Panc1 (cell line): ENCODE measurements at regions of chr11 and their contacts with region 1.

Region 1: GRCh38 chr11:24653901-24654300 is 157.0 kb downstream of the LUZP2 start:
- DNase-seq: no peak
- ATAC-seq: no peak
- H3K4me3 ChIP-seq: no peak overlapping the region
- H3K27ac ChIP-seq: no peak overlapping the region
- H3K4me1 ChIP-seq: no peaks in the 10 kb centered on the region
- H3K27me3 ChIP-seq: no peaks in the 10 kb centered on the region
- CTCF ChIP-seq: no peak

Region 2: DNA sequence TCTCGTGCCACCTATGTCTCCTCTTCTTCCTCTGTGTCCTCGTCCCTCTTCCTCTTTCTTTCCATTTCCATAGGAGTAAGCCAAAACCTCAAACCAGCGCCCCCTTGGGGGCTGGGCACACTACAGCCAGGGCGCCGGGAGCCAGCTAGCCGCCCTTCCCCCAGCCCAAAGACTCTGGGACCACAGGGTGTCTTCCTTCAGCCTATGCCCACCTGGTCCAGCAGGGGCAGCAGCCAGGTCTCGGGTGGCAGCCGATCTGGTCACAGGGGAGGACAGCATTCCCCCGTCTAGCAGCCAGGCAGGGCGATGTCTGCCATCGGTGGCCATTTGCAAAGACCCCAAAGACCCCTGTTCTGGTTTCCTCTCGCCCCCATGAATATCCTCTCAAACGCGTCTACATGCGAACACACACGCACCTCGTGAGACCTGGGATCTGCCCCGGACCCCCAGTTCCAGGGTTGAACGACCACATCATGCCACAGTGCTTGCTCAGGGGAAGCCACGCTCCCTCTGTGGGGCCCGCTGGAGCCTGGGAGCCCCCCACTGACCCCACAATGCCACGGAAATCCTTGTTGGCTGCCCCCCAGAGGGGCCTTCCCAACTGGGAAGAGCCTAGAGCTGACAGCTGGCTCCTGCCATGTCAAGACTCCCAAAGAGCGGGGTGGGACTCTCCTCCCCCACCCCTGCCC is 1247.6 kb before region 1 on chr11:
- CTCF ChIA-PET with region 1: no interaction called
- POLR2A ChIA-PET with region 1: no interaction called
- in situ Hi-C with region 1: no loop called
- intact Hi-C with region 1: loop called (anchors 10 kb)
- DNase-seq: no peak
- ATAC-seq: no peak
- H3K4me3 ChIP-seq: no peak overlapping the region
- H3K27ac ChIP-seq: no peak overlapping the region
- H3K4me1 ChIP-seq: no peaks in the 10 kb centered on the region
- H3K27me3 ChIP-seq: no peaks in the 10 kb centered on the region
- CTCF ChIP-seq: no peak